H1 (cell line): ENCODE measurements at regions of chr2 and their contacts with region 1.

Region 1: DNA sequence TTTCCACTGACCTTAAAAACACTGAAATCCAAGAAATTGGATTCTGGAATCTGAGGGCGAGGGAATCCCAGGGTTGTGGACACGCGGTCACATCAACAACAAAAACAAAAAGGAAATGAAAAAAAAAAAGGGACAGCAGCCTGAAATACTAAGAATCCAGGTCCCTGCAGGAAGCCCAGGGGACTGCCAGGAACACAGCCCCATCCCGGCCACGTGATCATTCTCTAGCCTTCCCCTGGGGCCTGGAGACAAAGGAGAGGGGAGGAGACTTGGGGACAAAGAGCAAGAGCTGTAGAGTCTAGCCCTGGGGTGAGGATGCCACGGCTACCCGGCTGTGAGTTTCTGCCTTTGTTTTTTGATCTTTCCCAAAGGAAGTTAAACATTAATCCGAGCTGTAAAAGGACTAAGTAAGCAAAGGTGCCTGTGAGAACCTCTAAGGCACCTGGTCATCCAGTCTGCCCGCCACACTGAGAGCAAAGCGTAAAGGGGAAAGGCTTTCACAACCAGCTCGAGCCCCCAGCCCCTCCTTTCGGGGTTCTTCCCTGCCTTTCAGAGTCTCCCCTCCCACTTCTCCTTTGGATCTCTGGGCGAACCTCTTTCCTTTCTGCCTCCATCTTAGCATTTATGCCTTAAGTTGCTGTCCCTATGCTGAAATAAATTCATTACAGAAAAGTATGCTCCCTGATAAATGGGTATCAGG is 57.9 kb upstream of the MSH2 start:
- DNase-seq: peak; percentile 85 to 96
- H3K4me3 ChIP-seq: peak overlapping the region; percentile 31 to 57 (median 50); a peak in 7 of 8 replicates
- H3K27ac ChIP-seq: peak overlapping the region; percentile 97
- H3K4me1 ChIP-seq: peaks cover 7 to 18% (median 11%) of the 10 kb centered on the region in 4 experiments; a peak in 6 of 7 replicates
- H3K27me3 ChIP-seq: no peaks in the 10 kb centered on the region
- CTCF ChIP-seq: peak in 2 of 3 experiments; percentile 20 to 27; a peak in 2 of 4 replicates
- EP300 ChIP-seq: no peak
- POLR2A ChIP-seq: peak; percentile 96 to 99
- RAD21 ChIP-seq: peak in 1 of 2 experiments; percentile 9; a peak in 2 of 4 replicates

Region 2: GRCh38 chr2:47309472-47309951 is 35.5 kb before region 1 on chr2:
- CTCF ChIA-PET with region 1: no interaction called
- POLR2A ChIA-PET with region 1: no interaction called
- DNase-seq: no peak
- H3K4me3 ChIP-seq: no peak overlapping the region
- H3K27ac ChIP-seq: no peak overlapping the region
- H3K4me1 ChIP-seq: peaks cover 0 to 13% (median 10%) of the 10 kb centered on the region in 4 experiments; a peak in 6 of 7 replicates
- H3K27me3 ChIP-seq: no peaks in the 10 kb centered on the region
- CTCF ChIP-seq: no peak
- EP300 ChIP-seq: no peak
- POLR2A ChIP-seq: no peak
- RAD21 ChIP-seq: no peak

Region 3: GRCh38 chr2:47357483-47357882 is 12.4 kb after region 1 on chr2:
- CTCF ChIA-PET with region 1: interaction called, 4 read pairs
- POLR2A ChIA-PET with region 1: interaction called, 26 read pairs
- DNase-seq: no peak
- H3K4me3 ChIP-seq: no peak overlapping the region
- H3K27ac ChIP-seq: no peak overlapping the region
- H3K4me1 ChIP-seq: peaks cover 2 to 8% (median 5%) of the 10 kb centered on the region in 4 experiments; a peak in 5 of 7 replicates
- H3K27me3 ChIP-seq: 0 out of 7 replicates have a peak, but pooled peaks cover 0 to 3% (median 0%) of the 10 kb centered on the region in 4 experiments
- CTCF ChIP-seq: no peak
- EP300 ChIP-seq: no peak
- POLR2A ChIP-seq: no peak
- RAD21 ChIP-seq: no peak

Region 4: GRCh38 chr2:47373747-47374146 is 28.7 kb after region 1 on chr2:
- CTCF ChIA-PET with region 1: interaction called, 13 read pairs
- POLR2A ChIA-PET with region 1: interaction called, 13 read pairs
- DNase-seq: no peak
- H3K4me3 ChIP-seq: no peak overlapping the region
- H3K27ac ChIP-seq: no peak overlapping the region
- H3K4me1 ChIP-seq: peaks cover 0 to 3% (median 0%) of the 10 kb centered on the region in 4 experiments; a peak in 1 of 7 replicates
- H3K27me3 ChIP-seq: peaks cover 0 to 6% (median 2%) of the 10 kb centered on the region in 4 experiments; a peak in 2 of 7 replicates
- CTCF ChIP-seq: peak; percentile 62 to 70 (median 63)
- EP300 ChIP-seq: no peak
- POLR2A ChIP-seq: no peak
- RAD21 ChIP-seq: peak; percentile 84 to 88

Region 5: GRCh38 chr2:47782671-47783485 is 437.8 kb after region 1 on chr2 and contains the start of gene MSH6:
- CTCF ChIA-PET with region 1: no interaction called
- POLR2A ChIA-PET with region 1: interaction called, 10 read pairs
- DNase-seq: peak; percentile 62 to 91
- H3K4me3 ChIP-seq: peak within 1 kb of the TSS; percentile 62 to 98 (median 92)
- H3K27ac ChIP-seq: peak within 1 kb of the TSS; percentile 93
- H3K4me1 ChIP-seq: peaks cover 1 to 8% (median 3%) of the 10 kb centered on the region in 4 experiments; a peak in 5 of 7 replicates
- H3K27me3 ChIP-seq: no peaks in the 10 kb centered on the region
- CTCF ChIP-seq: peak in 1 of 3 experiments; percentile 1; a peak in 1 of 4 replicates
- EP300 ChIP-seq: no peak
- POLR2A ChIP-seq: peak; percentile 91 to 92
- RAD21 ChIP-seq: no peak
- total RNA-seq, gene MSH6: 289 and 301 TPM in 2 replicates

Region 6: GRCh38 chr2:48006094-48006493 is 661.1 kb after region 1 on chr2:
- CTCF ChIA-PET with region 1: no interaction called
- POLR2A ChIA-PET with region 1: no interaction called
- DNase-seq: no peak
- H3K4me3 ChIP-seq: no peak overlapping the region
- H3K27ac ChIP-seq: no peak overlapping the region
- H3K4me1 ChIP-seq: no peaks in the 10 kb centered on the region
- H3K27me3 ChIP-seq: no peaks in the 10 kb centered on the region
- CTCF ChIP-seq: no peak
- EP300 ChIP-seq: no peak
- POLR2A ChIP-seq: no peak
- RAD21 ChIP-seq: no peak